Panc1 (cell line): ENCODE measurements at regions of chr9 and their contacts with region 1.

Region 1: GRCh38 chr9:93945400-93946337 is 9.5 kb downstream of the BARX1 start:
- DNase-seq: no peak
- ATAC-seq: peak; percentile 28; the same call in 1 of the 2 replicates
- H3K4me3 ChIP-seq: peak overlapping the region; percentile 43 to 59
- H3K27ac ChIP-seq: peak overlapping the region; percentile 18; the same call in 1 of the 2 replicates
- H3K4me1 ChIP-seq: peaks cover 17% of the 10 kb centered on the region
- H3K27me3 ChIP-seq: no peaks in the 10 kb centered on the region
- CTCF ChIP-seq: no peak

Region 2: DNA sequence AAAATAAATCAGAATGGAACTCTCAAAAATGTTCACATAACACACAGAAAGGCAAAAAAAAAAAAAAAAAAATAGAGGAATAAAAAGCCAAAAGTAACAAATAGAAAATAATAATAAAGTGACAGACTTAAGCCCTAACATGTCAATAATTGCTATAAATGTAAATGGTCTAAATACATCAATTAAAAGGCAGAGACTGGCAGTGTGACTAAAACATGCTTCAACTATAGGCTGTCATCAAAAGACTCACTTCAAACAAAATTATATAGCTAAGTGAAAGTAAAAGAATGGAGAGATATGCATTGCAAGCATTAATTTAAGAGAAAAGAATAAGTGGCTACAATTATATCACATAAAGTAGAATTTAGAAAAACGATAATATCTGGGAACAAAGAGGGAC is 255.1 kb before region 1 on chr9:
- CTCF ChIA-PET with region 1: no interaction called
- POLR2A ChIA-PET with region 1: interaction called, 13 read pairs
- in situ Hi-C with region 1: no loop called
- intact Hi-C with region 1: no loop called
- DNase-seq: no peak
- ATAC-seq: no peak
- H3K4me3 ChIP-seq: no peak overlapping the region
- H3K27ac ChIP-seq: no peak overlapping the region
- H3K4me1 ChIP-seq: no peaks in the 10 kb centered on the region
- H3K27me3 ChIP-seq: no peaks in the 10 kb centered on the region; the same call in 1 of the 2 replicates
- CTCF ChIP-seq: no peak

Region 3: DNA sequence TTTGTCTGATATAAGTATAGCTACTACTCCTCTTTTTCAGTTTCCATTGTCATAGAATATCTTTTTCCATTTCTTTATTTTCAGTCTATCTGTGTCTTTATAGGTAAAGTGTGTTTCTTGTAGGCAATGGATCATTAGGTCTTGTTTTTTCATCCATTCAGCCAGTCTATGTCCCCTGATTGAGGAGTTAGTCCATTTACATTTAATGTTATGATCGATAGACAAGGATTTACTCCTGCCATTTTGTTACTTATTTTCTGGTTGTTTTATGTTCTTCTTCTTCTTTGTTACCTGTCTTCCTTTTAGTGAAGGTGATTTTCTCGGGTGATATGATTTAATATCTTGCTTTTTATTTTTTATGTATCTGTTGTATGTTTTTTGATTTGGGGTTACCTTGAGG is 159.5 kb before region 1 on chr9:
- CTCF ChIA-PET with region 1: no interaction called
- POLR2A ChIA-PET with region 1: no interaction called
- in situ Hi-C with region 1: no loop called
- intact Hi-C with region 1: no loop called
- DNase-seq: no peak
- ATAC-seq: no peak
- H3K4me3 ChIP-seq: no peak overlapping the region
- H3K27ac ChIP-seq: no peak overlapping the region
- H3K4me1 ChIP-seq: no peaks in the 10 kb centered on the region
- H3K27me3 ChIP-seq: no peaks in the 10 kb centered on the region
- CTCF ChIP-seq: no peak

Region 4: GRCh38 chr9:93886911-93887310 is 58.8 kb before region 1 on chr9:
- CTCF ChIA-PET with region 1: no interaction called
- POLR2A ChIA-PET with region 1: no interaction called
- in situ Hi-C with region 1: no loop called
- intact Hi-C with region 1: no loop called
- DNase-seq: no peak
- ATAC-seq: no peak
- H3K4me3 ChIP-seq: no peak overlapping the region
- H3K27ac ChIP-seq: no peak overlapping the region
- H3K4me1 ChIP-seq: no peaks in the 10 kb centered on the region
- H3K27me3 ChIP-seq: no peaks in the 10 kb centered on the region
- CTCF ChIP-seq: no peak

Region 5: GRCh38 chr9:93976081-93976480 is 30.4 kb after region 1 on chr9:
- CTCF ChIA-PET with region 1: no interaction called
- POLR2A ChIA-PET with region 1: interaction called, 15 read pairs
- in situ Hi-C with region 1: no loop called
- intact Hi-C with region 1: no loop called
- DNase-seq: no peak
- ATAC-seq: no peak
- H3K4me3 ChIP-seq: no peak overlapping the region
- H3K27ac ChIP-seq: no peak overlapping the region
- H3K4me1 ChIP-seq: no peaks in the 10 kb centered on the region
- H3K27me3 ChIP-seq: no peaks in the 10 kb centered on the region
- CTCF ChIP-seq: no peak

Region 6: GRCh38 chr9:94030318-94031179 is 84.9 kb after region 1 on chr9:
- CTCF ChIA-PET with region 1: no interaction called
- POLR2A ChIA-PET with region 1: interaction called, 10 read pairs
- in situ Hi-C with region 1: no loop called
- intact Hi-C with region 1: no loop called
- DNase-seq: no peak
- ATAC-seq: peak; percentile 99
- H3K4me3 ChIP-seq: peak overlapping the region; percentile 83 to 91
- H3K27ac ChIP-seq: peak overlapping the region; percentile 91
- H3K4me1 ChIP-seq: peaks cover 6% of the 10 kb centered on the region
- H3K27me3 ChIP-seq: no peaks in the 10 kb centered on the region
- CTCF ChIP-seq: no peak

Region 7: GRCh38 chr9:94213511-94214124 is 267.9 kb after region 1 on chr9:
- CTCF ChIA-PET with region 1: no interaction called
- POLR2A ChIA-PET with region 1: no interaction called
- in situ Hi-C with region 1: no loop called
- intact Hi-C with region 1: no loop called
- DNase-seq: peak; percentile 52
- ATAC-seq: peak; percentile 99
- H3K4me3 ChIP-seq: no peak overlapping the region
- H3K27ac ChIP-seq: no peak overlapping the region
- H3K4me1 ChIP-seq: no peaks in the 10 kb centered on the region
- H3K27me3 ChIP-seq: no peaks in the 10 kb centered on the region
- CTCF ChIP-seq: peak; percentile 80